Activated naive CD4-positive, alpha-beta T cell treated with anti-CD3 and anti-CD28 coated beads for 36 hours (primary cell): ENCODE measurements at regions of chr11 and their contacts with region 1.

Region 1: DNA sequence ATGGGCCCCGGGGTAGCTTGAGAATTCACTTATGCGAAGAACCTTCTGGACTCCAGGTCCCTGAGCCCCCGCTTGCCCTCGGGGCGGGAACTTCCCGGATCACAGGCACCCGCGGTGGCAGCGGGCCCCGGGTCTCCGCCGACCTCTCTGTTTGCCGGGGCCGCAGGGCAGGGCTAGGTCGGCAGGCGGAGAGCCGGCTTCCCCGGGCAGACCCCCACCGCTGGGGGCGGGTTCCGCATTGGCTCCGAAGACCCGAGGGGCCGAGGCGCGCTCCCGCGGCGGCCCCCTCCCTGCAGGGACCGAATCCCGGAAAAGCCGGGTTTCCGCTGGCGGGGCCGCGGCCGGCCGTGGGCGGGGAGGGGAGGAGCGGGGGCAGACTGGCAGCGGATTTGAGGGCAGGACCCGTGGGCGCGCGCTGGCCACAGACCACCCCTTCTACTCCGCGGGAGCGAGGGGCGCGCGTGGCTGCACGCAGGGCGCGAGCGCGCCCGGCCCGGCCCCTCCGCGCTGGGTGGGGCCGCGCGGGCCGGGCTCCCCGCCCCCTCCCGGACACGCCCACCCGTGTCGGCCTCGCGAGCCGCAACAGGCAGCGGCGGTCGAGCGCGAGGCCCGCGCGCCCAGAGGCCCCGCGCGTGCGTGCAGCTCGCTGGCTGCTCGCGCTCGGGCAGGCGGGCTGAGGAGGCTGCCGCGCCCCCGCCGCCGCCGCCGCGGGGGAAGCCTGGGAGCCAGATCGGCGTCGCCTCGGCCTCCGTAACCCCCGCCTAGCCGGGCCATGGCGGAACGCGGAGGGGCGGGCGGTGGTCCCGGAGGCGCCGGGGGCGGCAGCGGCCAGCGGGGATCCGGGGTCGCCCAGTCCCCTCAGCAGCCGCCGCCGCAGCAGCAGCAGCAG is at the start of gene PACS1:
- DNase-seq: peak; percentile 81
- H3K4me3 Mint-ChIP-seq: peak within 1 kb of the TSS; percentile 89
- H3K27ac Mint-ChIP-seq: peak within 1 kb of the TSS; percentile 97
- H3K4me1 Mint-ChIP-seq: peaks cover 62% of the 10 kb centered on the region
- H3K27me3 Mint-ChIP-seq: no peaks in the 10 kb centered on the region
- total RNA-seq, gene PACS1: 77.8 to 80.7 TPM

Region 2: GRCh38 chr11:64489831-64490441 is 1580.0 kb before region 1 on chr11:
- CTCF ChIA-PET with region 1: no interaction called
- intact Hi-C with region 1: no loop called
- DNase-seq: peak; percentile 64
- H3K4me3 Mint-ChIP-seq: no peak overlapping the region
- H3K27ac Mint-ChIP-seq: no peak overlapping the region
- H3K4me1 Mint-ChIP-seq: peaks cover 14% of the 10 kb centered on the region
- H3K27me3 Mint-ChIP-seq: peaks cover 21% of the 10 kb centered on the region

Region 3: GRCh38 chr11:65934014-65934413 is 135.9 kb before region 1 on chr11:
- CTCF ChIA-PET with region 1: no interaction called
- intact Hi-C with region 1: no loop called
- DNase-seq: no peak
- H3K4me3 Mint-ChIP-seq: no peak overlapping the region
- H3K27ac Mint-ChIP-seq: no peak overlapping the region
- H3K4me1 Mint-ChIP-seq: peaks cover 8% of the 10 kb centered on the region
- H3K27me3 Mint-ChIP-seq: no peaks in the 10 kb centered on the region

Region 4: GRCh38 chr11:66011239-66011784 is 58.6 kb before region 1 on chr11:
- CTCF ChIA-PET with region 1: no interaction called
- intact Hi-C with region 1: no loop called
- DNase-seq: no peak
- H3K4me3 Mint-ChIP-seq: no peak overlapping the region
- H3K27ac Mint-ChIP-seq: no peak overlapping the region
- H3K4me1 Mint-ChIP-seq: peaks cover 7% of the 10 kb centered on the region
- H3K27me3 Mint-ChIP-seq: peaks cover 12% of the 10 kb centered on the region

Region 5: DNA sequence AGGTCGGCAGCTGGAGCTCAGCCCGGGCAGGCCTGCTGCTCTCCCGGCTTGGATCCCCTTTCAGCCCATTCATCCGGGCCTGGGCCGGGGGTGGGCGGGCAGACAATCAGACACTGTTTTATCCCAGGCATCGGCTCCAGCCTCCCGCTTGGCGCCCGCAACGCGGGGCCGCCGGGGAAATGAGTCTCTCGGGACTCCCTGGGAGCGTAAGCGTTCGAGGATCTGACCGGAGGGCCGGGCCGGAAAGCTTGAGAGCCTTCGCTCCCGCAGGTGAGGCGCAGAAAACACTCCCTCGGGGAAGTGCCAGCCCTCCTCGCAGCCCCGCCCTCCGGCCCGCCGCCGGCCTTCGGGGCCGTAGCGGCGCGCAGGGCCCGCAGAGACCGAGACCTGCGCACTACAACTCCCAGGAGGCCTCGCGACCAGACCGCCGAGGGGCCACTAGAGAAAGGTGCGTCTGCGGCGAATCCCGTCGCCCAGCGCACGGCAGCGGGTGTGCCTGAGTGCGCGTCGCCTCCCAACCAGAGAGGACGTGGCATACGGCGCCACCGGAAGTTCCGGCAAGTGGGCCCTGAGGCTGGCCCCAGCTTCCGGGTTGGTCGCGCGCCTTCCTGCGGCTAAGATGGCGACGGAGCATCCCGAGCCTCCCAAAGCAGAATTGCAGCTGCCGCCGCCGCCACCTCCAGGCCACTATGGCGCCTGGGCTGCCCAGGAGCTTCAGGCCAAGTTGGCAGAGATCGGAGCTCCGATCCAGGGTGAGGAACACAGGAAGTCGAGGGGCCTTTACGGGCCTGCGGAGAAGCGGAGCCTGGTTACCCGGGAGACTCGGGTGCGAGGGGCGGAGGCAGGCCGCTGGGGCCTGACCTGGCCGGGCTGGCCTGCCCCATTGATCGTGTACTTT is 17.9 kb before region 1 on chr11 and contains the start of gene SF3B2:
- CTCF ChIA-PET with region 1: interaction called, 58 read pairs
- intact Hi-C with region 1: loop called (anchors 1 kb)
- DNase-seq: peak; percentile 98
- H3K4me3 Mint-ChIP-seq: peak within 1 kb of the TSS; percentile 99
- H3K27ac Mint-ChIP-seq: peak within 1 kb of the TSS; percentile 96
- H3K4me1 Mint-ChIP-seq: peaks cover 41% of the 10 kb centered on the region
- H3K27me3 Mint-ChIP-seq: peaks cover 7% of the 10 kb centered on the region
- total RNA-seq, gene SF3B2: 319 to 321 TPM

Region 6: DNA sequence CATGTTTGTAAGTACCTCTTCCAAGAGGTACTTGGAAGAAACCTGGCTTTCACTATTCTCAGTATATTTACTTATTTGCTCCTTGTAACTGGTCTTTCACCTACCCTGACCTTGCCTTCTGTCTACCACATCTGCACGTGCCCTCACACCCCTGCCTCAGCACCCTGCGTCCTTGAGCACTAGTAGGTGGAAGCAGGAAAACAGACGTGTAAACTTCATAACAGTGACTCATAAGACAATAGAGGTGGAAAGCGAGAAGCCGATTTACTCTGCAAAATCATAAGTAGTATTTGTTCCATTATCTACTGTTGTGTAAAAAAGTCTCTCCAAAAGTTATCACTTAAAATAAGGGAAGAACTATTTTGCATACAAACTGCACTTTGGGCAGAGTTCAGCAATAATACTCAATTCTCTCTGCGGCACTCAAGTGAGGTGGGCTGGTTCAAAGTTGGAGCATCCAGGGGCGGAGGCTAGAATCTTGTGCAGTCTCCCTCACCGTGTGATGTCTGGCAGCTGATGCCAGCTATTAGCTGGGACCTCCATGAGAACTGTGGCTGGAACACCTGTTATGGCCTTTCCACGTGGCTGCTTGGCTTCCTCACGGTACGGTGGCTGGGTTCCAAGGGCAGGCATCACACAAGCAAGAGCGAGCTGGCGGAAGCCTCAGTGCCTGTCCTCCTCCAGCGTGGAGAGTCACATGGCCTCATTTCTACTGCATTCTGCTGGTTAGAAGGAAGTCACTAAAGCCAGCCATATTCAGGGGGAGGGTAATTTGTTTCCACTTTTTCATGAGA is 30.5 kb after region 1 on chr11:
- CTCF ChIA-PET with region 1: interaction called, 7 read pairs
- intact Hi-C with region 1: loop called (anchors 1 kb)
- DNase-seq: peak; percentile 80
- H3K4me3 Mint-ChIP-seq: peak overlapping the region; percentile 72
- H3K27ac Mint-ChIP-seq: peak overlapping the region; percentile 92
- H3K4me1 Mint-ChIP-seq: peaks cover 63% of the 10 kb centered on the region
- H3K27me3 Mint-ChIP-seq: no peaks in the 10 kb centered on the region

Region 7: GRCh38 chr11:66112601-66113098 is 42.7 kb after region 1 on chr11:
- CTCF ChIA-PET with region 1: interaction called, 13 read pairs
- intact Hi-C with region 1: no loop called
- DNase-seq: no peak
- H3K4me3 Mint-ChIP-seq: no peak overlapping the region
- H3K27ac Mint-ChIP-seq: peak overlapping the region; percentile 88
- H3K4me1 Mint-ChIP-seq: peaks cover 95% of the 10 kb centered on the region
- H3K27me3 Mint-ChIP-seq: no peaks in the 10 kb centered on the region

Region 8: GRCh38 chr11:66126808-66127555 is 57.0 kb after region 1 on chr11:
- CTCF ChIA-PET with region 1: interaction called, 15 read pairs
- intact Hi-C with region 1: loop called (anchors 2 kb)
- DNase-seq: peak; percentile 86
- H3K4me3 Mint-ChIP-seq: peak overlapping the region; percentile 77
- H3K27ac Mint-ChIP-seq: peak overlapping the region; percentile 98
- H3K4me1 Mint-ChIP-seq: peaks cover 70% of the 10 kb centered on the region
- H3K27me3 Mint-ChIP-seq: no peaks in the 10 kb centered on the region

Region 9: GRCh38 chr11:66222358-66223149 is 152.6 kb after region 1 on chr11:
- CTCF ChIA-PET with region 1: interaction called, 8 read pairs
- intact Hi-C with region 1: loop called (anchors 1 kb)
- DNase-seq: peak; percentile 98
- H3K4me3 Mint-ChIP-seq: peak overlapping the region; percentile 33
- H3K27ac Mint-ChIP-seq: peak overlapping the region; percentile 99
- H3K4me1 Mint-ChIP-seq: peaks cover 23% of the 10 kb centered on the region
- H3K27me3 Mint-ChIP-seq: no peaks in the 10 kb centered on the region